ENCODE measurements at regions of chr14 and their contacts with region 1.

Region 1: DNA sequence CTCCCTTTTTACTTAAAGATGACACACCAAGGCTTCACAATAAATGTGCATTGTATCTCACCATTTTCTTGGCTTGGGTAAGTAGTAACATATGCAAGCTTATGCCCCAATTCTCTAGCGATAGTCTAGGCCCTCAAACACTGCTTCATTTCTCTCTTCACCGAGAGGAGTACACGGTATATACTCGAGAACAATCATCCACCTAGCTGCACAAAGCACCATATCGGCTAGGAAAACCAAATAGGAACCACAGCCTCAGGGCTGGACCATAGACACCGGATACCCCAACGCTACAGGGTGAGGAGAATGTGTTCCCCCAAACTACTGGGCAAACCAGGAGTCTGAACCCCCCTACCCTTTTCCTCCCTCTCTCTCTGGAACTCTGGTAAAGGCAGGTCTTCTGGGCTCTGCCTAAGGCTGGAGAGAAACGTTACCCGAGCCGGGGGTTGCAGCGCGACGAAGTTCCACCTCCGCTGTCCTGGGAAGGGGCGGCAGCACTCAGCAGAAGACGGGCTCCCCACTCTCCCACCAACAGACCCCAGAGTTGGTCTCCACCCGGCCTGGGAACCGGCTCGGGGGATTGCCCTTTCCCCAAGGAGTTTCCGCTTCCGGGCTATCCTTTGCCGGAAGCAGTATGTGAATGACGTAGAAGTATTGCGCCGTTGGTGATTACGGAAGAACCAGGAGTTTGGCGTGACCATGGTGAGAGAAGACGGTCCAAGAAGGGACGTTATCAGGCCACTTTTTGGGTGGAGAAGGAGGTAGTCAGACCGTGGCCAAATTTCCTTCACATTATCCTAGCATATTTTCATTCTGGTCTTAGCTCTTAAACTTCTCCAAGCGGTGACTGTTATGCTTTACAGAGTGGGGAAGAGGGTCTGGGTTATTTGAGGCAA is at the starts of genes AREL1 and FCF1:
- DNase-seq: peak; percentile 74 to 94
- ATAC-seq: peak; percentile 92 to 94 (median 93)
- H3K4me3 ChIP-seq: peak within 1 kb of the TSS; percentile 76
- H3K4me3 Mint-ChIP-seq: peak within 1 kb of the TSS; percentile 97
- H3K27ac ChIP-seq: peak within 1 kb of the TSS; percentile 87
- H3K27ac Mint-ChIP-seq: peak within 1 kb of the TSS; percentile 97 to 99
- H3K4me1 ChIP-seq: peaks cover 7% of the 10 kb centered on the region
- H3K4me1 Mint-ChIP-seq: peaks cover 50 to 54% of the 10 kb centered on the region in 2 donors
- H3K27me3 ChIP-seq: no peaks in the 10 kb centered on the region
- H3K27me3 Mint-ChIP-seq: no peaks in the 10 kb centered on the region
- CTCF ChIP-seq: no peak
- total RNA-seq, gene AREL1: 65.9 to 83.0 (median 82.3) TPM
- total RNA-seq, gene FCF1: 37.1 to 49.6 (median 40.4) TPM

Region 2: DNA sequence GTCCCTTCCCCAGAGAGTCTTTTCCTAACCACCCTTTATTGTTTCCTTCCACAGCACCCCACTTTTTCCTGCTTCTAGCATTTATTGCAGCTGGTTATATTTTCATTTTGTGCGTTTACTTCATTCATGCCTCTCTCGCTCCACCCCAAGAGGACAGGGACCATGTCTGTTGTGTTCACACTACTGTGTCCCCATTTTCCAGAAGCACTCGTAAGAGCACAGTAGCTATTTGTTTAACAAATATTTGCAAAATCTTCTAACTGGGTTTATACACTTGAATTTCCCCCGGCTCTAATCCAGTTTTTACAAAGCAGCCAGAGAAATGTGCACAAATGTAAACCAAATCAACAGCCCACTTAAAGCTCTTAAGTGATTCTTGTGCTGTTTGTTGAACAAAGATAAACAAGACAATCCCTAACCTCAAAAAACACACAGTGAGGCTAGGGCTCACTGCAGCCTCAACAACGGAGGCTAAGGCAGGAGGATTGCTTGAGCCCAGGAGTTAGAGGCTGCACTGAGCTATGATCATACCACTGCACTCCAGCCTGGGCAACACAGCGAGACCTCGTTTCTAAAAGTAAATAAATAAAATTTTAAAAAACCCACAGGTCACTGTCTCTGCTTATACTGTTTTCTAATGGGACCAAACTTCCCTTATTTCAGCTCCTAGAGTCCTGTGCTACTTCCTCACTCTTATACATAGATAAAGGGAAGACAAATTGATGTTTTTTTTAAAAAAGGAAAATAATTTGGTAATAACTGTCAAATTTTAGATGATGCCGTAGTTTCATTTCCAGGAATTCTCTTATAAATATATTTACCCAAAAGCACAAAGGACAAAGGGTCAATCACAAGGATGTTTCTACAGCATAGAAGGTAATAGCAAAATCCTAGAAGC is 403.4 kb before region 1 on chr14:
- intact Hi-C with region 1: no loop called
- DNase-seq: no peak
- ATAC-seq: no peak
- H3K4me3 ChIP-seq: no peak overlapping the region
- H3K4me3 Mint-ChIP-seq: no peak overlapping the region
- H3K27ac ChIP-seq: no peak overlapping the region
- H3K27ac Mint-ChIP-seq: no peak overlapping the region
- H3K4me1 ChIP-seq: no peaks in the 10 kb centered on the region
- H3K4me1 Mint-ChIP-seq: no peaks in the 10 kb centered on the region
- H3K27me3 ChIP-seq: no peaks in the 10 kb centered on the region
- H3K27me3 Mint-ChIP-seq: peaks cover 0 to 4% of the 10 kb centered on the region in 2 donors
- CTCF ChIP-seq: no peak

Region 3: GRCh38 chr14:74762917-74763802 is 50.4 kb after region 1 on chr14 and contains the start of gene YLPM1:
- intact Hi-C with region 1: loop called (anchors 1 kb)
- DNase-seq: peak; percentile 87 to 98
- ATAC-seq: peak; percentile 94 to 99 (median 95)
- H3K4me3 ChIP-seq: peak within 1 kb of the TSS; percentile 96
- H3K4me3 Mint-ChIP-seq: peak within 1 kb of the TSS; percentile 92
- H3K27ac ChIP-seq: peak within 1 kb of the TSS; percentile 93
- H3K27ac Mint-ChIP-seq: peak within 1 kb of the TSS; percentile 91 to 94
- H3K4me1 ChIP-seq: peaks cover 13% of the 10 kb centered on the region
- H3K4me1 Mint-ChIP-seq: peaks cover 45 to 46% of the 10 kb centered on the region in 2 donors
- H3K27me3 ChIP-seq: no peaks in the 10 kb centered on the region
- H3K27me3 Mint-ChIP-seq: peaks cover 0 to 2% of the 10 kb centered on the region in 2 donors
- CTCF ChIP-seq: peak; percentile 57
- total RNA-seq, gene YLPM1: 86.1 to 101 (median 93.3) TPM

Region 4: DNA sequence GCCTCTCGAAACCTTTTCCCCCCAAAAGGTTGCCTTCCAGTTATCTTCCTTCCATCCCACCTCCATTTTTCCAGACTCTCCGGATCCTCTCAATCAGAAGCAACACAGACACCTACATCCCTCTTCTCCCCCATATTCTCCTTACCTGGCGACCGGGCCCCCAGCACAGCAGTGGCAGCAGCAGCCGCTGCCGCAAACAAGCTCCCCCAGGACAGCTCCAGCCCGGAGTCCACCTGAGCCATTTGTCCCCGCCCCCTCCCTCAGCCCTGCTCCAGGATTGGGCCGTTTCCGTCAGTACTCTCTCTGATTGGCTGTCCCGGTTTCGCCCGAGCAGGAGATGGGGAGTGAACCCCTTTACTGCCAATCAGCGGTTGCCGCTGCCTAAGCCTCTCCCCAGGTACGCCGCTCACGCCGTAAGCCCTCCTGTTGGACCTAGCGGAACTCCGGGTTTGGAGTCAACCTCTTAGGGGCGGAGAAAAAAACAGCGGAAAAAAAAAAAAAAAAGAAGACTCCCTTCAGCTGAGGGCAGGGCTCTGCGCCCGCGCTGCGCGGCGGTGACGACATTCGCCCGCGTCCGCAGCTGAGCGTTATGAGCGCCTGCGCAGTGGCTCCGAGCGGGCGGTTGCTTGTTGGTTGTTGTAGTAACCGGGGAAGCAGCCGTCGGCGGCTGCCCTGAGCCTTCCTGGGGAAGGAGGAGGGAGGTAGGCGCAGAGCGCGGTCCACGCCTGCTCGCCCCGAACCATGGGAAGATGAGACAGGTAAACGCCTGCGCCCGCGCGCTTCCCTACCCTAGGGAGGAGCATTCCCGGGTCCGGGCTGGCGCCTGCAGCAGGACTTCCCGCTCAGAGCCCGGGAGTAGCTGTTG is 948.1 kb after region 1 on chr14 and contains the starts of genes ERG28 and TTLL5:
- intact Hi-C with region 1: loop called (anchors 5 kb)
- DNase-seq: peak; percentile 94 to 99
- ATAC-seq: peak; percentile 90 to 97 (median 93)
- H3K4me3 ChIP-seq: peak within 1 kb of the TSS; percentile 91
- H3K4me3 Mint-ChIP-seq: peak within 1 kb of the TSS; percentile 91
- H3K27ac ChIP-seq: peak within 1 kb of the TSS; percentile 90
- H3K27ac Mint-ChIP-seq: peak within 1 kb of the TSS; percentile 91 to 95
- H3K4me1 ChIP-seq: peaks cover 10% of the 10 kb centered on the region
- H3K4me1 Mint-ChIP-seq: peaks cover 20 to 24% of the 10 kb centered on the region in 2 donors
- H3K27me3 ChIP-seq: no peaks in the 10 kb centered on the region
- H3K27me3 Mint-ChIP-seq: no peaks in the 10 kb centered on the region
- CTCF ChIP-seq: no peak
- total RNA-seq, gene ERG28: 10.5 to 11.1 (median 10.9) TPM
- total RNA-seq, gene TTLL5: 27.1 to 34.3 (median 32.5) TPM

Measured in natural killer cell (primary cell).